Activated T-helper 1 cell treated with anti-CD3 and anti-CD28 coated beads, Interleukin-12 subunit alpha, Interleukin-12 subunit beta, Interleukin-2, Interleukin-4 antibody, amounts not matched to agents 30 ng/mL and 10 ng/mL and 1 ng/mL, durations not matched to agents 14 hours and 24 hours and 36 hours (primary cell): ENCODE measurements at regions of chr20 and their contacts with region 1.

Region 1: GRCh38 chr20:43955062-43955749 is 40.6 kb downstream of the TOX2 start:
- DNase-seq: peak; percentile 35
- H3K4me3 Mint-ChIP-seq: peak overlapping the region; percentile 53
- H3K27ac Mint-ChIP-seq: peak overlapping the region; percentile 77
- H3K4me1 Mint-ChIP-seq: peaks cover 82% of the 10 kb centered on the region
- H3K27me3 Mint-ChIP-seq: peaks cover 7% of the 10 kb centered on the region

Region 2: GRCh38 chr20:43456809-43457639 is 498.2 kb before region 1 on chr20:
- intact Hi-C with region 1: loop called (anchors 5 kb)
- DNase-seq: peak; percentile 83
- H3K4me3 Mint-ChIP-seq: peak overlapping the region; percentile 88
- H3K27ac Mint-ChIP-seq: peak overlapping the region; percentile 100
- H3K4me1 Mint-ChIP-seq: peaks cover 34% of the 10 kb centered on the region
- H3K27me3 Mint-ChIP-seq: peaks cover 17% of the 10 kb centered on the region

Region 3: GRCh38 chr20:43666376-43667328 is 288.6 kb before region 1 on chr20 and contains the start of gene MYBL2:
- intact Hi-C with region 1: loop called (anchors 5 kb)
- DNase-seq: peak; percentile 71
- H3K4me3 Mint-ChIP-seq: peak within 1 kb of the TSS; percentile 82
- H3K27ac Mint-ChIP-seq: peak within 1 kb of the TSS; percentile 48
- H3K4me1 Mint-ChIP-seq: peaks cover 23% of the 10 kb centered on the region
- H3K27me3 Mint-ChIP-seq: peaks cover 14% of the 10 kb centered on the region
- total RNA-seq, gene MYBL2: 95.1 and 95.5 TPM in 2 replicates

Region 4: DNA sequence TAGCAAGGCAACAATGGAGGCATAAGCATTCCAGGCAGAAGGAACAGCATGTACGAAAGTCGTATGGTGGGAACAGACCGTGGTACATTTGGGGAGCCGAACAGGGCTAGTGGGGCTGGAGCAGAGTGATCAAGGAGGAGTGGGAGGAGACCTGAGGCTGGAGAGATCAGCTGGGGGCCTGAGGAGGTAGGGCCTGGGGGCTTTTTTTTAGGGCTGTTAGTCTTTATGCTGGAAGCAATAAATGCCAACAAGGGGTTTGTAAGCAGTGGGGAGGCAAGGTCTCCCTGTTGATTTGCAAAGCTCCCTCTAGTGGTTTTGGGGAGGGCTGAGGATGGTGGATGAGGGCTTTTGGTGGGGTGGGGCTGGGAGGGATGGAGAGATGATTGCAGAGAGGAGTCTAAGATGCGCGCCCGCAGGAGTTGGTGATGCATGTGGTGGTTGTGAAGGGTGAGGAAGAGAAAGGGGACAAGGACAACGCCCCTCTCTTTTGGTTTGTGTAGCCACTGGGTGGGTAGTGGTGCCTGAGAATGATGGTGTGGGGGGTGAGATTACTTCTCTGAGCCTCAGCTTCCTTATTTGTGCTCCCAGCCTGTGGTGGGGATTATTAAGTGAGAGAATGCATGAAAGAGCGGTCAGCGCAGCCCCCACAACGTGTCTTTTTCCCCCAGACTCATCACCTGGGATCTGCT is 114.7 kb before region 1 on chr20:
- intact Hi-C with region 1: loop called (anchors 1 kb)
- DNase-seq: peak; percentile 17
- H3K4me3 Mint-ChIP-seq: no peak overlapping the region
- H3K27ac Mint-ChIP-seq: peak overlapping the region; percentile 85
- H3K4me1 Mint-ChIP-seq: peaks cover 59% of the 10 kb centered on the region
- H3K27me3 Mint-ChIP-seq: peaks cover 7% of the 10 kb centered on the region

Region 5: DNA sequence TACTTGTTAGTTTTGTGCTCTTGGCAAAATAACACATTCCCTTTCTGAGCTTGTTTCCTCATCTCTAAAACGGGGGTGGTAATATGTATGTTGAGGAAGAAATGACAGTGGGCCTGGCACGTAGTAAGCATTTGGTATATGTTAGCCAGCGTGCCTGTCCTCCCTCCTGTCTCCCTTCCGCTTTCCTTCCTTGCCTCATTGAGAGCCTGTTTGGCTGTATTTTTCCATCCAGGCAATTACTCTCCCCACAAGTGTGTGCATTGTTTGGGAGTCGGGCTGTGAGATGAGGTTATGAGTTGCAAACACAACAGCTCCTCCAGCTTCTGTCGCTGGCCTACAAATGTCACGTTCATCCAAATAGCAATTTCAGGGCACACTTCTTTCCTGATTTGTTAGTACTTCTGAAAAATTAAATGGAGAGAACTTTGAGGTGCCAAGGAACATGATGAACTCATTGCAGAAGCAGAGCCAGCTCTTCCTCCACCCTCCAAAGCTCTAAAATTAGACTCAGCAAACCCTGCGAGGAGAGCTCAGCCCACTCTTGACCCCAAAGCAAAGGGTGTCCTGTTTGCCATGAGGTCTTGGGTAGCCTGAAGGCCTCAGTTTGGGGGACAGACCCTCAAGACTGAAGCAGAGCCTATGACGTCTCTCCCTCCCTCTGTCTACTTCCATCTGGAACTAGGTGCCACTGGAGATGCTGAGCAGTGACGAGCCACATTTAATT is 91.2 kb before region 1 on chr20:
- intact Hi-C with region 1: no loop called
- DNase-seq: no peak
- H3K4me3 Mint-ChIP-seq: no peak overlapping the region
- H3K27ac Mint-ChIP-seq: no peak overlapping the region
- H3K4me1 Mint-ChIP-seq: no peaks in the 10 kb centered on the region
- H3K27me3 Mint-ChIP-seq: peaks cover 7% of the 10 kb centered on the region

Region 6: DNA sequence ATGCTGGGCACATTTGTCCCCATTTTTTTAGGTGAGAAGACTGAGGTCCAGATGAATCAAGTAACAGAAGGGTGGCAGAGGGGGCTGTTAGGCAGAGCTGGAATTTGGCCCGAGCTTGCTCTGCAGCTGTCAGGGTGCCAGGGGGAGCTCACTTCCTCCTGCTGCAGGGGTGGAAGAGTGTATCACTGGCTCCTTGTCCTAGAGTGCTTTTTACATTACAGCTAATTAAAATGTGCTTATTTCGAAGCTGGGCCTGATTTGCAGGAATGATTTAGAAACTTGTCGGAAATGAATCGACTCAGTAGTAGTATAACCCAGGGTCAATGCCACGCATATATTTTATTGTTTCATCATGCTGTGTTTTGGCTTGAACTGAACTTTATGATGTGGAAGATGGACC is 29.4 kb before region 1 on chr20:
- intact Hi-C with region 1: loop called (anchors 1 kb)
- DNase-seq: no peak
- H3K4me3 Mint-ChIP-seq: peak overlapping the region; percentile 56
- H3K27ac Mint-ChIP-seq: peak overlapping the region; percentile 70
- H3K4me1 Mint-ChIP-seq: peaks cover 61% of the 10 kb centered on the region
- H3K27me3 Mint-ChIP-seq: peaks cover 21% of the 10 kb centered on the region

Region 7: GRCh38 chr20:43975096-43975768 is 20.0 kb after region 1 on chr20:
- intact Hi-C with region 1: loop called (anchors 1 kb)
- DNase-seq: no peak
- H3K4me3 Mint-ChIP-seq: no peak overlapping the region
- H3K27ac Mint-ChIP-seq: no peak overlapping the region
- H3K4me1 Mint-ChIP-seq: peaks cover 42% of the 10 kb centered on the region
- H3K27me3 Mint-ChIP-seq: peaks cover 11% of the 10 kb centered on the region

Region 8: GRCh38 chr20:44069203-44070011 is 114.2 kb after region 1 on chr20:
- intact Hi-C with region 1: loop called (anchors 1 kb)
- DNase-seq: peak; percentile 65
- H3K4me3 Mint-ChIP-seq: peak overlapping the region; percentile 52
- H3K27ac Mint-ChIP-seq: peak overlapping the region; percentile 87
- H3K4me1 Mint-ChIP-seq: peaks cover 69% of the 10 kb centered on the region
- H3K27me3 Mint-ChIP-seq: peaks cover 4% of the 10 kb centered on the region